AG04449 (cell line): ENCODE measurements at regions of chr22 and their contacts with region 1.

Region 1: DNA sequence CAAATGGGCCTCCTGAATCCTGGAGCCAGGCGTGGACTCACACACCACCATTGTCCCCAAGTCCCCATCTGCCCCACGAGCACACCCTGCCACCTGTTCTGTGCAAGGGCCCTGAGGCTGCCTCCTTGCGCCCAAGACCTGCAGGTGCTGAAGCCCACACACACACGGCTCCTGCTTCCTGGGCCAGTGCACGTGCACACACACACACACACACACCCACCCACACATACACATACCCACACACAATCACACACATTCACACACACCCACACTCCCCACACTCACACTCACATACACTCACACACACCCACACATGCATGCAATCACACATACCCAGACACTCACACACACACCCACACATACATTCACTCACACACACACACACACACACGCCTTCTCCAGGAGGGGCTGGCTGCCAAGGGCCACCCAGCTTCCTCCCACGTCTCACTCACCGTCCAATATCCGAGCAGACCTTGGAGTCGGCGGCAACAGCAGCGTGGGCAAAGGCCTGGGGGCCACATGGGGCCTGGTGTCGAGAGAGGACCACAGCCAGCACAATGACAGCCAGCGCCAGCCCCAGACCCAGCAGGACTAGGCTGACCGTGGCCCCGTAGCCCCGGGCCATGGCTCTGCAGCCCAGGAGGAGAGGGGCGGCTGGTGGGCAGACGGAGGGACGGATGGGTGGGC is 638 bp downstream of the GGT5 start:
- DNase-seq: no peak
- H3K4me3 ChIP-seq: no peak overlapping the region
- CTCF ChIP-seq: no peak

Region 2: GRCh38 chr22:24189249-24190158 is 54.7 kb before region 1 on chr22:
- CTCF ChIA-PET with region 1: interaction called, 102 read pairs
- POLR2A ChIA-PET with region 1: no interaction called
- DNase-seq: no peak
- H3K4me3 ChIP-seq: no peak overlapping the region
- CTCF ChIP-seq: peak; percentile 97

Region 3: DNA sequence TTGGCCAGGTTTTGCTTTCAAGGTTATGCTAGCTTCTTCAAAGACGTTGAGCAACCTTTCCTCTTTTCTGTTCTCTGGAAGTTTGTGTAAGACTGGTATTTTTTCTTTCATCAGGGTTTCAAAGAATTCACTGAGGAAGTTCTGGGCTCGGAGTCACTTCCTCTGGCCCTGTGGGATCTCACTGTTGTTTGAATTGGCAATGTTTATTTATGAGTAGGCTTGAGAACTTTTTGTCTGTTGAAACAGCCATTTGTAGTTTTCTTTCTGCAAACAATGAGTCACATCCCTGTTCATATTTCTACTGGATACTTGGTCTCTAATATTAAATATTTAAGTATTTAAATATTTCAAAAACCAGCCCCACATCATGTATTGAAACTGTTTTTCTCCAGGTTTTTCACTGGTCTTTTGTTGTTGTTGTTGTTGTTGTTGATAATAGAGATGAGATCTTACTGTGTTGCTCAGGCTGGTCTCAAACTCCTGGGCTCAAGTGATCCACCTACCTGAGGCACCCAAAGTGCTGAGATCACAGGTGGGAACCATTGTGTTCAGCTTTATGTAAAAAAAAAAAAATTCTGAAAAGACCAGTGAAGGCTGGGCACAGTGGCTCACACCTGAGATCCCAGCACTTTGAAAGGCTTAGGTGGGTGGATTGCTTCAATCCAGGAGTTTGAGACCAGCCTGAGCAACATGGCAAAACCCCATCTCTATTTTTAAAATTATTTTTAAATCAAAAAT is 36.1 kb before region 1 on chr22:
- CTCF ChIA-PET with region 1: interaction called, 10 read pairs
- POLR2A ChIA-PET with region 1: interaction called, 3 read pairs
- DNase-seq: peak; percentile 92
- H3K4me3 ChIP-seq: no peak overlapping the region
- CTCF ChIP-seq: no peak

Region 4: GRCh38 chr22:24225044-24225601 is 19.1 kb before region 1 on chr22:
- CTCF ChIA-PET with region 1: no interaction called
- POLR2A ChIA-PET with region 1: no interaction called
- DNase-seq: no peak
- H3K4me3 ChIP-seq: no peak overlapping the region
- CTCF ChIP-seq: no peak

Region 5: GRCh38 chr22:24433813-24434470 is 189.7 kb after region 1 on chr22:
- CTCF ChIA-PET with region 1: no interaction called
- POLR2A ChIA-PET with region 1: no interaction called
- DNase-seq: no peak
- H3K4me3 ChIP-seq: no peak overlapping the region
- CTCF ChIP-seq: no peak